ENCODE measurements at regions of chr22 and their contacts with region 1.

Region 1: GRCh38 chr22:30005213-30005857 is 74.9 kb upstream of the HORMAD2 start:
- DNase-seq: peak; percentile 76 to 83
- H3K4me3 ChIP-seq: no peak overlapping the region
- H3K27ac ChIP-seq: no peak overlapping the region
- H3K4me1 ChIP-seq: peaks cover 12 to 18% of the 10 kb centered on the region in 2 donors
- H3K27me3 ChIP-seq: no peaks in the 10 kb centered on the region
- CTCF ChIP-seq: peak; percentile 71 to 94 (median 92)
- POLR2A ChIP-seq: no peak

Region 2: GRCh38 chr22:29883045-29883774 is 122.1 kb before region 1 on chr22 and contains the start of gene MTMR3:
- intact Hi-C with region 1: loop called (anchors 10 kb)
- DNase-seq: peak; percentile 92
- H3K4me3 ChIP-seq: peak within 1 kb of the TSS; percentile 39 to 96 (median 93)
- H3K27ac ChIP-seq: peak within 1 kb of the TSS; percentile 98 to 99 (median 99)
- H3K4me1 ChIP-seq: peaks cover 35 to 39% of the 10 kb centered on the region in 2 donors
- H3K27me3 ChIP-seq: no peaks in the 10 kb centered on the region
- CTCF ChIP-seq: peak in 4 of 6 experiments; percentile 28 to 57 (median 54)
- POLR2A ChIP-seq: peak; percentile 40 to 86
- total RNA-seq, gene MTMR3: 52.8 to 101 (median 69.1) TPM

Region 3: DNA sequence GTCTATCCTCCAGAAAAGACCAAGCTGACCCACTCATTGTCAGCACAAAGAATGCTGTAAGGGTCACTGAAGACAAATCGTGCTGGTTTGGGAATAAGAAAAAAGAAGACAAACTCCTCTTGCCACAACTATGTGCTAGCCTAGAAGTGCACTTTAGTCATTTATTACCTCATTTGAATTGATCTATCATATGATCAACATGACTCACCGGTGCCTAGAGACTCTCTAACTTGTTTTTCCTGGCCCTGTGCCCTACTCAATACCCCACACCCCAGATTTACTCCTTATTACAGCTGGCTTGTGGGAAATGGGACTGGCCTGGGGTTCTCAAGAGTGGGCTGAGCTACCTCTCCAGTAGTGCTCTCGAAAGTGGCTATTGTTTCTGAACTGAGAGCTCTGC is 39.0 kb after region 1 on chr22:
- intact Hi-C with region 1: no loop called
- DNase-seq: peak; percentile 57 to 61
- H3K4me3 ChIP-seq: no peak overlapping the region
- H3K27ac ChIP-seq: peak overlapping the region in 2 of 3 donors; percentile 38 to 81
- H3K4me1 ChIP-seq: peaks cover 17 to 31% of the 10 kb centered on the region in 2 donors
- H3K27me3 ChIP-seq: no peaks in the 10 kb centered on the region
- CTCF ChIP-seq: no peak
- POLR2A ChIP-seq: no peak

Measured in thyroid gland (tissue), 4 donors.